CD4-positive, alpha-beta memory T cell (primary cell): ENCODE measurements at regions of chr17 and their contacts with region 1.

Region 1: GRCh38 chr17:76772842-76773525 is 35.1 kb downstream of the MFSD11 start:
- DNase-seq: peak; percentile 70 to 90 (median 73)
- H3K4me3 ChIP-seq: peak overlapping the region; percentile 25 to 31
- H3K4me3 Mint-ChIP-seq: peak overlapping the region; percentile 82 to 92 (median 85)
- H3K27ac ChIP-seq: peak overlapping the region; percentile 78
- H3K27ac Mint-ChIP-seq: peak overlapping the region; percentile 96 to 99 (median 98)
- H3K4me1 ChIP-seq: peaks cover 16% of the 10 kb centered on the region
- H3K4me1 Mint-ChIP-seq: peaks cover 19 to 27% (median 24%) of the 10 kb centered on the region in 4 donors
- H3K27me3 ChIP-seq: no peaks in the 10 kb centered on the region
- H3K27me3 Mint-ChIP-seq: no peaks in the 10 kb centered on the region

Region 2: GRCh38 chr17:76753061-76753961 is 19.7 kb before region 1 on chr17:
- CTCF ChIA-PET with region 1: interaction called, 4 read pairs
- POLR2A ChIA-PET with region 1: interaction called, 14 read pairs
- intact Hi-C with region 1: loop called (anchors 1 kb)
- DNase-seq: peak; percentile 65 to 82 (median 73)
- H3K4me3 ChIP-seq: peak overlapping the region; percentile 46 to 62
- H3K4me3 Mint-ChIP-seq: peak overlapping the region; percentile 87 to 93 (median 91)
- H3K27ac ChIP-seq: peak overlapping the region; percentile 69
- H3K27ac Mint-ChIP-seq: peak overlapping the region; percentile 95 to 99 (median 97)
- H3K4me1 ChIP-seq: peaks cover 36% of the 10 kb centered on the region
- H3K4me1 Mint-ChIP-seq: peaks cover 23 to 33% (median 27%) of the 10 kb centered on the region in 4 donors
- H3K27me3 ChIP-seq: no peaks in the 10 kb centered on the region
- H3K27me3 Mint-ChIP-seq: no peaks in the 10 kb centered on the region

Region 3: GRCh38 chr17:76862494-76862893 is 89.5 kb after region 1 on chr17:
- CTCF ChIA-PET with region 1: no interaction called
- POLR2A ChIA-PET with region 1: no interaction called
- intact Hi-C with region 1: no loop called
- DNase-seq: no peak
- H3K4me3 ChIP-seq: no peak overlapping the region
- H3K4me3 Mint-ChIP-seq: no peak overlapping the region
- H3K27ac ChIP-seq: no peak overlapping the region
- H3K27ac Mint-ChIP-seq: no peak overlapping the region
- H3K4me1 ChIP-seq: no peaks in the 10 kb centered on the region
- H3K4me1 Mint-ChIP-seq: peaks cover 0 to 2% (median under 1%) of the 10 kb centered on the region in 4 donors
- H3K27me3 ChIP-seq: no peaks in the 10 kb centered on the region
- H3K27me3 Mint-ChIP-seq: peaks cover 6 to 14% of the 10 kb centered on the region in 2 donors